Panc1 (cell line): ENCODE measurements at regions of chr3 and their contacts with region 1.

Region 1: DNA sequence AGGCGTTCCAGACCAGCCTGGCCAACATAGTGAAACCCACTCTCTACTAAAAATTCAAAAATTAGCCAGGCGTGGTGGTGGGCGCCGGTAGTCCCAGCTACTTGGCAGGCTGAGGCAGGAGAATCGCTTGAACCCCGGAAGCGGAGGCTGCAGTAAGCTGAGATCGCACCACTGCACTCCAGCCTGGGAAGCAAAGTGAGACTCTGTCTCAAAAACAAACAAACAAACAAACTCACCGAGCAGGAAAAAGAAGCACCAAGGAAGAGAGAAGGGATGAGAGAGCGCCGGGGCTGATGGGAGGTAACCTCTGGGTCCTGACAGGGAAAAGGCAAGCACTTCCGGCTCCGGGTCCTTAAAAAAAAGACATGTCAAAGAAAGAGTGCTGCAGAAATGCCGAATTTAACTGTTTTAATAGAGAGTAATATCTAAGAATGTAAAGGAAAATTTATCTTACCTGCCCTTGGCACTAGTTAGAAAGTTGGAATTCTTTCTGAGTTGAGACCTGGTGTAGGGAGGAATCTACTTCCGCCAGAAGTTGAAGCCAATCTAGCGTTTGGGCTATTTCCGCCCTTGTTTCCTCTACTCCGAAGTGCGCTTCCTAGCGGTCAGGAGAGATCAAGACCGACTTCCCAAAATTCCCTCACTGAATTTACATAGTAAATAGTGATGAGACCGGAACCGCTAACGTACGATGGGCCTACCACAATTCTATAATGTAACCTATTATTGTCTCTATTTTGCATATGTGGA is 29.1 kb downstream of the EFCAB12 start:
- DNase-seq: peak; percentile 98
- ATAC-seq: peak; percentile 94
- H3K4me3 ChIP-seq: peak overlapping the region; percentile 72 to 93
- H3K27ac ChIP-seq: peak overlapping the region; percentile 96
- H3K4me1 ChIP-seq: peaks cover 16% of the 10 kb centered on the region
- H3K27me3 ChIP-seq: no peaks in the 10 kb centered on the region
- CTCF ChIP-seq: peak; percentile 97

Region 2: GRCh38 chr3:129240436-129240835 is 158.9 kb before region 1 on chr3:
- CTCF ChIA-PET with region 1: interaction called, 20 read pairs
- POLR2A ChIA-PET with region 1: no interaction called
- in situ Hi-C with region 1: no loop called
- intact Hi-C with region 1: no loop called
- DNase-seq: no peak
- ATAC-seq: no peak; the same call in 1 of the 2 replicates
- H3K4me3 ChIP-seq: no peak overlapping the region
- H3K27ac ChIP-seq: peak overlapping the region; percentile 8; the same call in 1 of the 2 replicates
- H3K4me1 ChIP-seq: peaks cover 16% of the 10 kb centered on the region
- H3K27me3 ChIP-seq: no peaks in the 10 kb centered on the region
- CTCF ChIP-seq: no peak

Region 3: GRCh38 chr3:129311054-129311902 is 88.0 kb before region 1 on chr3:
- CTCF ChIA-PET with region 1: interaction called, 10 read pairs
- POLR2A ChIA-PET with region 1: interaction called, 3 read pairs
- in situ Hi-C with region 1: no loop called
- intact Hi-C with region 1: no loop called
- DNase-seq: no peak
- ATAC-seq: no peak
- H3K4me3 ChIP-seq: no peak overlapping the region
- H3K27ac ChIP-seq: no peak overlapping the region
- H3K4me1 ChIP-seq: peaks cover 9% of the 10 kb centered on the region
- H3K27me3 ChIP-seq: no peaks in the 10 kb centered on the region
- CTCF ChIP-seq: no peak

Region 4: DNA sequence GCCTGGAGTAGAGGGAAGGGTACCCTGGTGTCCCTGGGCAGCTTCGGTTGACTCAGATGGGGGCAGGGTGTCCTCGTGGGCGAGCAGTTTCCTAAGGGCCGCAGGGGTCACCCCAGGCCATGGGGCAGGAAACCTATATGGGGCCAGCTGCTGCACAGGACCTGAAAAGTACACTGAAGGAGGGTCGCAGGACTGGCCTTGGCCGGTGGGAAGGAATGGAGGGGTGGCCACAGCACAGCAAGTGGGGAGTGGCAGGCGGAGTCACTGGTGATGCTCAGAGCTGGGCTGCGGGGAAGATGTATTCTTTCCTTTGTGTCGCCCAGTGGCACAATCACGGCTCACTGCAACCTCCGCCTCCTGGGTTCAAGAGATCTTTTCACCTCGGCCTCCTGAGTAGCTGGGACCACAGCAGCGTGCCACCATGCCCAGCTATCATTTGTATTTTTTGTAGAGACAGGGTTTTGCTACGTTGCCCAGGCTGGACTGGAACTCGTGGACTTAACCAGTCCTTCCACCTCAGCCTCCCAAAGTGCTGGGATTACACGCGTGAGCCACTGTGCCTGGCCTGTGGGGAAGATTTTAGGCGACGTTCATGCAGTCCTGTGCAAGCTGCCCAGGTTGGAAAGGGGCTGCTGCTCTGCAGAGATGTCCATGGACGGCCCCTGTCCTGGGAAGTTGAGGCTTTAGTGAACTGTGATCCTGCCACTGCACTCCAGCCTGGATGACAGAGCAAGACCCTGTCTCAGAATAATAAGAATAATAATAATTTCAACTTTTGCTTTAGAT is 28.1 kb before region 1 on chr3:
- CTCF ChIA-PET with region 1: no interaction called
- POLR2A ChIA-PET with region 1: no interaction called
- in situ Hi-C with region 1: no loop called
- intact Hi-C with region 1: no loop called
- DNase-seq: no peak
- ATAC-seq: peak; percentile 41; the same call in 1 of the 2 replicates
- H3K4me3 ChIP-seq: no peak overlapping the region
- H3K27ac ChIP-seq: no peak overlapping the region
- H3K4me1 ChIP-seq: no peaks in the 10 kb centered on the region
- H3K27me3 ChIP-seq: no peaks in the 10 kb centered on the region
- CTCF ChIP-seq: no peak

Region 5: DNA sequence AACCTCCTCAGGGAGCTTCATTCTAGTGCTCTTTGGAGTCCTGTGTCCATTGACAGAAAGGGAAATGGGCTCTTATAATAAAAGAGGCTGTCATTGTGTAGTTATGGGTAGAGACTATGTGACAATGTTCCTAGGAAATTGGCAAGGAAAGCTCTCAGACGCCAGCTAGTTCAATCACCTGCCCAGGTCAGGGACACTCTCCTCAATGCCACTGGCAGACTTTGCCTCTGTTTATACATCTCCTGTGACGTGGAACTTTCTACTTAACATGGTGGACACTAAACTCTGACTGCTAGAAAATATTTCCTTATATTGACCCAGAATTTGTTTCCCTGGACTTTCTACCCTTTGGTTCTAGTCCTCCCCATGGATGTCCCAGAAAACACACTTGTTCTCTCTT is 26.3 kb after region 1 on chr3:
- CTCF ChIA-PET with region 1: interaction called, 3 read pairs
- POLR2A ChIA-PET with region 1: interaction called, 15 read pairs
- in situ Hi-C with region 1: no loop called
- intact Hi-C with region 1: no loop called
- DNase-seq: no peak
- ATAC-seq: no peak
- H3K4me3 ChIP-seq: no peak overlapping the region
- H3K27ac ChIP-seq: no peak overlapping the region
- H3K4me1 ChIP-seq: peaks cover 11% of the 10 kb centered on the region
- H3K27me3 ChIP-seq: no peaks in the 10 kb centered on the region
- CTCF ChIP-seq: no peak

Region 6: GRCh38 chr3:129453732-129454131 is 54.4 kb after region 1 on chr3:
- CTCF ChIA-PET with region 1: no interaction called
- POLR2A ChIA-PET with region 1: no interaction called
- in situ Hi-C with region 1: no loop called
- intact Hi-C with region 1: no loop called
- DNase-seq: no peak
- ATAC-seq: no peak
- H3K4me3 ChIP-seq: no peak overlapping the region
- H3K27ac ChIP-seq: no peak overlapping the region
- H3K4me1 ChIP-seq: no peaks in the 10 kb centered on the region
- H3K27me3 ChIP-seq: no peaks in the 10 kb centered on the region
- CTCF ChIP-seq: no peak